ENCODE measurements at regions of chr6 and their contacts with region 1.

Region 1: GRCh38 chr6:18595774-18596530 is 208.8 kb downstream of the RNF144B start:
- DNase-seq: peak; percentile 13
- H3K4me3 Mint-ChIP-seq: no peak overlapping the region
- H3K27ac Mint-ChIP-seq: no peak overlapping the region
- H3K4me1 Mint-ChIP-seq: no peaks in the 10 kb centered on the region
- H3K27me3 Mint-ChIP-seq: peaks cover 1% of the 10 kb centered on the region

Region 2: GRCh38 chr6:18823782-18824386 is 227.9 kb after region 1 on chr6:
- intact Hi-C with region 1: loop called (anchors 10 kb)
- DNase-seq: no peak
- H3K4me3 Mint-ChIP-seq: no peak overlapping the region
- H3K27ac Mint-ChIP-seq: no peak overlapping the region
- H3K4me1 Mint-ChIP-seq: no peaks in the 10 kb centered on the region
- H3K27me3 Mint-ChIP-seq: no peaks in the 10 kb centered on the region

Region 3: GRCh38 chr6:19210849-19211590 is 615.1 kb after region 1 on chr6:
- intact Hi-C with region 1: loop called (anchors 5 kb)
- DNase-seq: no peak
- H3K4me3 Mint-ChIP-seq: no peak overlapping the region
- H3K27ac Mint-ChIP-seq: no peak overlapping the region
- H3K4me1 Mint-ChIP-seq: no peaks in the 10 kb centered on the region
- H3K27me3 Mint-ChIP-seq: no peaks in the 10 kb centered on the region